ENCODE measurements at regions of chr16 and their contacts with region 1.

Region 1: GRCh38 chr16:67480833-67481560 is at the start of gene ATP6V0D1:
- DNase-seq: peak; percentile 96
- ATAC-seq: peak; percentile 85
- H3K4me3 ChIP-seq: peak within 1 kb of the TSS; percentile 87 to 98 (median 88)
- H3K27ac ChIP-seq: peak within 1 kb of the TSS; percentile 91
- H3K4me1 ChIP-seq: peaks cover 58% of the 10 kb centered on the region
- H3K27me3 ChIP-seq: no peaks in the 10 kb centered on the region; a peak in 1 of 5 replicates
- CTCF ChIP-seq: peak; percentile 97
- EP300 ChIP-seq: peak in 1 of 2 experiments; percentile 32; a peak in 2 of 4 replicates
- POLR2A ChIP-seq: peak; percentile 76 to 80
- RAD21 ChIP-seq: peak; percentile 93
- total RNA-seq, gene ATP6V0D1: 49.5 and 51.1 TPM in 2 replicates

Region 2: DNA sequence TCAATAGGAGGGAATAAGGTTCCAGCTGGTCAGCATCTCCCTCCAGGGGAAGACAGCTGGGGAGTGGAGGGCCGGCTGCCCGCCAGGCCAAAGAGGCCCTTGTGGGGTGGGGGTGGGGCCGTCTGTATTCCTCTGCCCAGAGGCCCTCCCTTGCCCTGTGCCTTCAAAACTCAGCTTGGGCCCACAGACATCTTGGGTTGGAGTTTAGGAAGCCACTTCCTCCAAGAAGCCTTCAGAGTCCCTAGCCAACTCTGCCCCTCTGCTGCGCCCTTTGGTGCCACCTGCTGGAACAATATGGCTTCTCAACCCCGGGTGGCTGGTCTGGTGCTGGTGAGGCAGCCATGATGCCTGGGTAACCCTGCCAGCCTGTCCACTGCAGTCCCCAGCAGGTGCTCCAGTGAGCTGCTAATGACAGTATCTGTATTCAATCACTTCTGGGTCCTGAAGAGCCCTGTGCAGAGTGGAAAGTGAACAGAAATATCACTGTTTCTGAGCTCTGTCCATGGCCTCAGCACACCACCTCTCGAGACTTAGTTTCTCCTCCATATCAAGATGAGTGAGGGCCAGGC is 33.4 kb before region 1 on chr16:
- CTCF ChIA-PET with region 1: no interaction called
- POLR2A ChIA-PET with region 1: interaction called, 15 read pairs
- in situ Hi-C with region 1: no loop called
- intact Hi-C with region 1: no loop called
- DNase-seq: peak; percentile 49
- ATAC-seq: peak; percentile 2; the same call in 1 of the 3 replicates
- H3K4me3 ChIP-seq: no peak overlapping the region
- H3K27ac ChIP-seq: peak overlapping the region; percentile 88
- H3K4me1 ChIP-seq: peaks cover 67% of the 10 kb centered on the region
- H3K27me3 ChIP-seq: no peaks in the 10 kb centered on the region
- CTCF ChIP-seq: peak; percentile 93
- EP300 ChIP-seq: no peak
- POLR2A ChIP-seq: no peak
- RAD21 ChIP-seq: peak; percentile 76

Region 3: DNA sequence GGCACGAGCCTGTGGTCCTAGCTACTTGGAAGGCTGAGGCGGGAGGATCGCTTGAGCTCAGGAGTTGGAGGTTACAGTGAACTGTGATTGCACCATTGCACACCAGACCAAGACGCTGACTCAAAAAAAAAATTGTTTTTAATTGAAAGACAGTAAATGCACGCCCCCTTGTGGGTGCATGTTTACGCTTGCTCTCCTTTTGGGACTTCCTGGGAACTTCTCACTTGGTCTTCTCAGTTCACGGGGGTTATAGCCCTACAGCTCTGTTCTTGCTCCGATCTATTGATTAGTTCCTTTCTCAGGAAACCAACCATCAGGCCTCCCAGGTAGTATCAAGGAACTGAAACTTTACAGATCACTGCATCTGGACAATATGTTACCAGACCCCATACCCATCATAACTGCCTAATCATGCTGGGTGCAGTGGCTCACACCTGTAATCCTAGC is 33.4 kb after region 1 on chr16:
- CTCF ChIA-PET with region 1: interaction called, 9 read pairs
- POLR2A ChIA-PET with region 1: interaction called, 8 read pairs
- in situ Hi-C with region 1: loop called (anchors 5 kb)
- intact Hi-C with region 1: loop called (anchors 1 kb)
- DNase-seq: peak; percentile 87
- ATAC-seq: peak; percentile 57
- H3K4me3 ChIP-seq: no peak overlapping the region
- H3K27ac ChIP-seq: no peak overlapping the region
- H3K4me1 ChIP-seq: peaks cover 19% of the 10 kb centered on the region
- H3K27me3 ChIP-seq: peaks cover 0 to 12% of the 10 kb centered on the region in 2 experiments; a peak in 1 of 5 replicates
- CTCF ChIP-seq: peak; percentile 83
- EP300 ChIP-seq: no peak
- POLR2A ChIP-seq: no peak
- RAD21 ChIP-seq: peak; percentile 66

Region 4: GRCh38 chr16:67608364-67608763 is 127.4 kb after region 1 on chr16:
- CTCF ChIA-PET with region 1: no interaction called
- POLR2A ChIA-PET with region 1: no interaction called
- in situ Hi-C with region 1: no loop called
- intact Hi-C with region 1: no loop called
- DNase-seq: no peak
- ATAC-seq: no peak
- H3K4me3 ChIP-seq: no peak overlapping the region
- H3K27ac ChIP-seq: no peak overlapping the region
- H3K4me1 ChIP-seq: no peaks in the 10 kb centered on the region
- H3K27me3 ChIP-seq: no peaks in the 10 kb centered on the region
- CTCF ChIP-seq: no peak
- EP300 ChIP-seq: no peak
- POLR2A ChIP-seq: no peak
- RAD21 ChIP-seq: no peak